HCT116 (cell line): ENCODE measurements at regions of chr5 and their contacts with region 1.

Region 1: DNA sequence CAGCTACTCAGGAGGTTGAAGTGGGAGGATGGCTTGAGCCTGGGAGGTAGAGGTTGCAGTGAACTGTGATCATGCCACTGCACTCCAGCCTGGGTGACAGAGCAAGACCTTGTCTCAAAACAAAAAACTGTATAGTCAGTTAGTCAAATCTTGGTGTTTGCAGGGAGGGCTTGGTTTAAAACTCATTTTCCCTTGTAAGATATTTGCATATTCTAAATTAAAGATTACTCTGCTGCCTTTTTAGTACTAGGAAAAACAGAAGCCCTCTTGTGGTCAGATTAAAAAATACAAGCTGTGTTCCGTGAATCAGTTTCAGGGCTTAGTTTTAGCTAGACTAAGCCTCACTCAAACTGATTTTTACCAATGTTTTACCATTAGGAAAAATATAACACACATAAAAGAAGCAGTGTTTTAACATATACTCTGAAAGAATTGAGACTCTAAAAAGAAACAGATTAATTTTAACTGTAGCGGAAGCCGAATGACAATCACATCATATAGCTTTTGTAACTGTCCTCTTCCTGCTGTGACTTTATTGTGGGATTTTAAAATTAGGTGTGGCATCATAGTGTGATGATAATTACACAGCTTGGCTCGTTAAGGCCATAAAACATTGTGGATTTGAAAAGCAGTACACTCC is 84.9 kb upstream of the BASP1 start:
- DNase-seq: no peak
- ATAC-seq: peak; percentile 78
- H3K4me3 ChIP-seq: no peak overlapping the region
- H3K27ac ChIP-seq: no peak overlapping the region
- H3K4me1 ChIP-seq: peaks cover 7 to 9% of the 10 kb centered on the region in 2 experiments
- H3K27me3 ChIP-seq: no peaks in the 10 kb centered on the region
- CTCF ChIP-seq: peak; percentile 40 to 67 (median 48); a peak in 5 of 6 replicates
- POLR2A ChIP-seq: no peak
- RAD21 ChIP-seq: peak; percentile 50

Region 2: GRCh38 chr5:16791036-16791705 is 341.4 kb before region 1 on chr5:
- CTCF ChIA-PET with region 1: interaction called, 7 read pairs
- POLR2A ChIA-PET with region 1: no interaction called
- RAD21 ChIA-PET with region 1: interaction called, 3 to 5 read pairs
- intact Hi-C with region 1: loop called (anchors 1 kb)
- DNase-seq: peak; percentile 37
- ATAC-seq: peak; percentile 62
- H3K4me3 ChIP-seq: no peak overlapping the region
- H3K27ac ChIP-seq: no peak overlapping the region
- H3K4me1 ChIP-seq: no peaks in the 10 kb centered on the region
- H3K27me3 ChIP-seq: no peaks in the 10 kb centered on the region
- CTCF ChIP-seq: peak; percentile 49 to 69 (median 56); a peak in 5 of 6 replicates
- POLR2A ChIP-seq: no peak
- RAD21 ChIP-seq: peak; percentile 78

Region 3: DNA sequence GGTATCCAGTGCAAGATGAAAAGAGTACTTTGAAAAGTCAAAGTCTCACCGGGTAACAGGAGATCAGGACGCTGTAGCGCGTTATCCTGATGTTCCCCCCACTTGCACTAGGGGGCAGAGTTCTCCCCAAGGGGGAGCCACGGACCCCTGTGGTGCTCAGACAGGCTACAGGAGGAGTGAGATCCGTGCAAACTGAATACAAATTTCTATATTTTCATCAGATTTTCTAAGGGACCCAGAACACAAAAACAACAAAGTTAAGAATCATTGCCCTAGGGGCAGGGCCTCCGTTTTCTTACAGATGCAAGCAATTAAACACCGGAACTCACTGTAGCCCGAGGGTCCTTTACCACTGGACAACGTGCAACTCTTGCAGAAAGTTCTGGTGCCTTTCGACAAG is 198.4 kb before region 1 on chr5:
- CTCF ChIA-PET with region 1: interaction called, 6 read pairs
- POLR2A ChIA-PET with region 1: interaction called, 3 read pairs
- RAD21 ChIA-PET with region 1: no interaction called
- intact Hi-C with region 1: loop called (anchors 5 kb)
- DNase-seq: peak; percentile 63
- ATAC-seq: peak; percentile 50
- H3K4me3 ChIP-seq: peak overlapping the region; percentile 81 to 82; a peak in 3 of 4 replicates
- H3K27ac ChIP-seq: no peak overlapping the region
- H3K4me1 ChIP-seq: peaks cover 28 to 34% of the 10 kb centered on the region in 2 experiments
- H3K27me3 ChIP-seq: peaks cover 5% of the 10 kb centered on the region; the same call in 1 of the 2 replicates
- CTCF ChIP-seq: peak; percentile 52 to 94 (median 92); a peak in 5 of 6 replicates
- POLR2A ChIP-seq: no peak
- RAD21 ChIP-seq: peak; percentile 65

Region 4: DNA sequence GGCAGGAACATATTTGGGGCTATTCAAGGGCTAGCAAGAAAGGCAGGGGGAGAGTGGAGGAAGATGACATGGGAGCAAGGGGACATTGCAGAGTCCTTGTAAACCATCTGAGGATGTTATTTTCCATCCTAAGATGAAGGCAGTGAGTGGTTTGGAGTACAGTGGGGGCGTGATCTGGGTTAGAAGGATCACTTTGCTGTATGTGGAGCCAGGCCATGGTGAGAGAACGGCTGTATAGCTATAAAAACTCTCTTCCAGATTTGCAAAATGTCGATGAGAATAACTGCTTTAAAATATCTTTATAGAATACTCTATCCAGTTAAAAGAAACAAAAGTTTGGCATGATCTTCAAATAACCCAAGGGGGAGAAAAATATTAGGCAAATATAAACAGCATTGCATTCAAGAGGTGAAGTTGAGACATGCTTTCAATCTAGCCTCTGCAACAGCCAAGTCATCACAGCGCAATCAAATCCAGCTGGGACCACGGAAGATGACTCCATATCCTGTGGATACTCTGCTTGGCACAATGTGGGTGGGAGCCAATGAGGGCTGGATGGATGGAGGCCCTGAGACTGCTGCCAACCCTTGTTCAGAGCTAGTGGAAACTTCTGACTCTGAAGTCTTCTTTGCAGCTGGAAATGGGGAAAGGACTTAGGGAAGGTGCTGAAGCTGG is 26.7 kb before region 1 on chr5:
- CTCF ChIA-PET with region 1: interaction called, 13 read pairs
- POLR2A ChIA-PET with region 1: no interaction called
- RAD21 ChIA-PET with region 1: no interaction called
- intact Hi-C with region 1: no loop called
- DNase-seq: no peak
- ATAC-seq: no peak
- H3K4me3 ChIP-seq: no peak overlapping the region
- H3K27ac ChIP-seq: no peak overlapping the region
- H3K4me1 ChIP-seq: no peaks in the 10 kb centered on the region
- H3K27me3 ChIP-seq: no peaks in the 10 kb centered on the region
- CTCF ChIP-seq: no peak
- POLR2A ChIP-seq: no peak
- RAD21 ChIP-seq: no peak

Region 5: GRCh38 chr5:17118631-17119030 is 13.9 kb before region 1 on chr5:
- CTCF ChIA-PET with region 1: interaction called, 15 read pairs
- POLR2A ChIA-PET with region 1: interaction called, 3 read pairs
- RAD21 ChIA-PET with region 1: no interaction called
- intact Hi-C with region 1: no loop called
- DNase-seq: peak; percentile 70
- ATAC-seq: peak; percentile 98
- H3K4me3 ChIP-seq: no peak overlapping the region
- H3K27ac ChIP-seq: peak overlapping the region; percentile 18; the same call in 1 of the 2 replicates
- H3K4me1 ChIP-seq: peaks cover 9 to 14% of the 10 kb centered on the region in 2 experiments; a peak in 3 of 4 replicates
- H3K27me3 ChIP-seq: no peaks in the 10 kb centered on the region
- CTCF ChIP-seq: no peak
- POLR2A ChIP-seq: no peak
- RAD21 ChIP-seq: peak; percentile 3; the same call in 1 of the 2 replicates